ENCODE measurements at regions of chr20 and their contacts with region 1.

Region 1: DNA sequence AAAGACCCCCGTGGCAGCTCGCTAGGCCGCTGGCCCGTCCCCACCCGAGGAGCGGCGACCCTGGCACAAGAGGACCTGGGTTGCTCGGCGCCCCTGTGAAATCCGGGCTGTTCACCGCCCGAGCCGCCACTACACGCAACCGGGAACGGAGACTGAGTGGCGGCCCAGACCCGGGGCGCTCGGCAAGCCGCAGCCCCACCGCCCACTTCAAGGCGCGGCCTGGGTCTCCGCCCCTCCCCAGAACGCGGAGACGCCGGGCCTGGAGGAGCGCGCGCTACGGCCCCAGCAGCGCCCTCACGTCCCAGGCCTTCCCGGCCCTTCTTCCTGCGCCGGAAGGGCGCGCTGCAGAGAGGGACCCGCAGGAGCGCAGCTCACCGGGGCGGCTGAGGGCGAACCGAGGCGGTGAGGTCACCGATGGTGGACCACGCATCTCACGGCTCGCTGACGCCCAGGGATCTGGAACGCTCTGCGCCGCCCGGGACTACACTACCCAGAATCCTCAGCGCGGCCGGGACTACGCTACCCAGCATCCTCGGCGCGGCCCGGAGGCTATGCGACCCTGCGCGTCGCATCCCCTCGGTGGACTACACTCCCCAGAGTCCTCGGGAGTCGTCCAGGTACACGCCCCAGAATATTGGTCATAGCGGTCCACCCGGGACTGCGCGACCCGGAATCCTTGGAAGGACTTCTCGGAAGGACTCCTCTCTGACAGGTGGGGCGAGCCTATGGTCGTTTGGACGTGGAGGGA is at the start of gene ZNF337:
- DNase-seq: peak; percentile 97
- ATAC-seq: peak; percentile 100
- total RNA-seq, gene ZNF337: 7.0 TPM

Region 2: GRCh38 chr20:25623736-25624499 is 72.6 kb before region 1 on chr20 and contains the start of gene NANP:
- intact Hi-C with region 1: loop called (anchors 1 kb)
- DNase-seq: peak; percentile 97
- ATAC-seq: peak; percentile 97
- total RNA-seq, gene NANP: 3.8 TPM

Region 3: GRCh38 chr20:25750765-25751696 is 54.5 kb after region 1 on chr20:
- intact Hi-C with region 1: loop called (anchors 5 kb)
- DNase-seq: no peak
- ATAC-seq: peak; percentile 92

Region 4: DNA sequence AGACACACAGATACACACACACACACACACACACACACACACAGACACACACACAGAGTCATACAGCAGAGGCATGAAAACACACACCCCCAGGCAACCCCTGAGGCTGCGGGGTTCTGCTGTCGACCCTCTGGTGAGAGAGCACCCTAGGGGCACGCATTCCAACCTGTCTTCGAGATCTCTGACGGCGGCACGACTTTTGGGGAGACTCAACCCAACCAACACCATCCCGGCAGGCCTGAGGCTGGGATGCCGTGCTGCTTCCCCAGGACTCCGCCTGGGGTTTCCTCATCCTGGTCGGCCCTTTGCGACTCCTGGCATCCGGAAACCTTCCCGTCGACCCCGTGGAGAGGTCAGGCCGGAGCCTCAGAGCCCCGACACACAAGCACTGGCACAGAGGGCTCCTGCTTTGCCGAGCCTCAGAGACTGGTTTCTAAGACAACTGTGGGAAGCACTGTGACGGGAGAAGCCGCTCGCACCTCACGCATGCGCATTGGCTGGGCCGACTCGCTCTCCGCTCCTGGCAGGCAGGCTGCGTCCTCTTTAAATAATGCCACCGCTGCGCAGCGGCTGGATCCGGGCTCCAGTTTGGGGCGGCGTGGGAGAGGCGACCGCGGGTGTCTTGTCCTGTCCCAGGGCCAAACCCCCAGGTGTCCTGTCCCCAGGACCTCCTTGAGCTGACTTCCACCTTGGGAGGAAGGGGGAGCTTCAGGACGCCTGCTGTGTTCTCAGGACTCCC is 169.0 kb after region 1 on chr20:
- intact Hi-C with region 1: loop called (anchors 5 kb)
- DNase-seq: peak; percentile 89
- ATAC-seq: peak; percentile 54

Region 5: GRCh38 chr20:25987073-25987927 is 290.7 kb after region 1 on chr20:
- intact Hi-C with region 1: loop called (anchors 5 kb)
- DNase-seq: peak; percentile 77
- ATAC-seq: peak; percentile 52